T-cell (primary cell): ENCODE measurements at regions of chr3 and their contacts with region 1.

Region 1: DNA sequence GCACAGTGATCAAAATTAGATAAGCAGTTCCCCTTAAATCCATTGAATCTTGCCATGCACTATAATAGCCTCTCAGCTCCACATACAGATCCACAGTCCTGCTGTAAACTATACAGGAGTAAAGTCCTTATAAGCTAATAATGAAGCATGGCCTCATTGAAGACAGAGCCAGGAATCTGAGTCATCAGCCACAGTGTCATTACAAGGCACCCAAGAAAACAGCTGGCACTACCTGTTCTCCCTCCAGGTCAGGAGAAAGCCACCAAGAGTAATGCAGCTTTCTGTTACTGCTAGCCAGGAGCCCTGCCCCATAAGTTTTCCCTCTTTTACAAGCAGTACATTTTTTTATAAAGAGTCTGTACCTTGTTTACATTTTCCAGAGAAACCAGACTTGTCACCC is 27.3 kb downstream of the WDR49 start:
- DNase-seq: no peak
- ATAC-seq: no peak
- H3K4me3 ChIP-seq: no peak overlapping the region
- H3K4me3 Mint-ChIP-seq: no peak overlapping the region
- H3K27ac ChIP-seq: no peak overlapping the region
- H3K27ac Mint-ChIP-seq: no peak overlapping the region
- H3K4me1 ChIP-seq: no peaks in the 10 kb centered on the region
- H3K4me1 Mint-ChIP-seq: no peaks in the 10 kb centered on the region
- H3K27me3 ChIP-seq: no peaks in the 10 kb centered on the region
- H3K27me3 Mint-ChIP-seq: peaks cover 3 to 4% of the 10 kb centered on the region in 2 donors

Region 2: GRCh38 chr3:167480748-167481147 is 145.7 kb before region 1 on chr3:
- CTCF ChIA-PET with region 1: no interaction called
- POLR2A ChIA-PET with region 1: no interaction called
- DNase-seq: no peak
- ATAC-seq: no peak
- H3K4me3 ChIP-seq: no peak overlapping the region
- H3K4me3 Mint-ChIP-seq: no peak overlapping the region
- H3K27ac ChIP-seq: no peak overlapping the region
- H3K27ac Mint-ChIP-seq: no peak overlapping the region
- H3K4me1 ChIP-seq: no peaks in the 10 kb centered on the region
- H3K4me1 Mint-ChIP-seq: no peaks in the 10 kb centered on the region
- H3K27me3 ChIP-seq: no peaks in the 10 kb centered on the region
- H3K27me3 Mint-ChIP-seq: no peaks in the 10 kb centered on the region

Region 3: DNA sequence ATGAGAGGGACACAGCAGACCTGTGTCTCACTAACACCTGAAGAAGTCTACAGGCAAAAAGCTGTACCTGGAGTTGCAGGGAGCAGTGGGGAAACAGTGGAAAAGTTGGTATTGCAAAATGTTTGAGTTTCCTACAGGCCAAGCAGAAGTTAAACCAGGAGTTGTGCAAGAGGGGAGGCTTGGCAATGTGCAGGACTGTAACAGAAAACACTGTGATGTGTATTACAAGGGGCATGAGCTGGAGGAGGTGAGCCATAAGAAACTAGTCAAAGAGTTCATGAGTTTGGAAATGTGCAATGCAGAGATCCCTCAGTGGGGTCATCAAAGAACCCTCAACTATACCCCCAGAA is 105.5 kb before region 1 on chr3:
- CTCF ChIA-PET with region 1: no interaction called
- POLR2A ChIA-PET with region 1: no interaction called
- DNase-seq: no peak
- ATAC-seq: no peak
- H3K4me3 ChIP-seq: no peak overlapping the region
- H3K4me3 Mint-ChIP-seq: no peak overlapping the region
- H3K27ac ChIP-seq: no peak overlapping the region
- H3K27ac Mint-ChIP-seq: no peak overlapping the region
- H3K4me1 ChIP-seq: no peaks in the 10 kb centered on the region
- H3K4me1 Mint-ChIP-seq: no peaks in the 10 kb centered on the region
- H3K27me3 ChIP-seq: no peaks in the 10 kb centered on the region
- H3K27me3 Mint-ChIP-seq: peaks cover 0 to 3% of the 10 kb centered on the region in 2 donors

Region 4: GRCh38 chr3:167669699-167670098 is 43.2 kb after region 1 on chr3:
- CTCF ChIA-PET with region 1: no interaction called
- POLR2A ChIA-PET with region 1: no interaction called
- DNase-seq: no peak
- ATAC-seq: no peak
- H3K4me3 ChIP-seq: no peak overlapping the region
- H3K4me3 Mint-ChIP-seq: no peak overlapping the region
- H3K27ac ChIP-seq: no peak overlapping the region
- H3K27ac Mint-ChIP-seq: peak overlapping the region in 1 of 2 donors; percentile 7
- H3K4me1 ChIP-seq: no peaks in the 10 kb centered on the region
- H3K4me1 Mint-ChIP-seq: no peaks in the 10 kb centered on the region
- H3K27me3 ChIP-seq: no peaks in the 10 kb centered on the region
- H3K27me3 Mint-ChIP-seq: no peaks in the 10 kb centered on the region

Region 5: GRCh38 chr3:167783781-167784180 is 157.3 kb after region 1 on chr3:
- CTCF ChIA-PET with region 1: interaction called in 1 of 2 experiments, 14 read pairs
- POLR2A ChIA-PET with region 1: no interaction called
- DNase-seq: no peak
- ATAC-seq: no peak
- H3K4me3 ChIP-seq: no peak overlapping the region
- H3K4me3 Mint-ChIP-seq: no peak overlapping the region
- H3K27ac ChIP-seq: no peak overlapping the region
- H3K27ac Mint-ChIP-seq: no peak overlapping the region
- H3K4me1 ChIP-seq: no peaks in the 10 kb centered on the region
- H3K4me1 Mint-ChIP-seq: no peaks in the 10 kb centered on the region
- H3K27me3 ChIP-seq: no peaks in the 10 kb centered on the region
- H3K27me3 Mint-ChIP-seq: no peaks in the 10 kb centered on the region